CD4-positive, alpha-beta memory T cell (primary cell): ENCODE measurements at regions of chr10 and their contacts with region 1.

Region 1: GRCh38 chr10:28532383-28533175 is at the start of gene WAC:
- DNase-seq: peak; percentile 96 to 99 (median 97)
- H3K4me3 ChIP-seq: peak within 1 kb of the TSS; percentile 82 to 86
- H3K4me3 Mint-ChIP-seq: peak within 1 kb of the TSS; percentile 98 to 100 (median 99)
- H3K27ac ChIP-seq: peak within 1 kb of the TSS; percentile 99
- H3K27ac Mint-ChIP-seq: peak within 1 kb of the TSS; percentile 99 to 100 (median 100)
- H3K4me1 ChIP-seq: peaks cover 55% of the 10 kb centered on the region
- H3K4me1 Mint-ChIP-seq: peaks cover 45 to 75% (median 61%) of the 10 kb centered on the region in 4 donors
- H3K27me3 ChIP-seq: no peaks in the 10 kb centered on the region
- H3K27me3 Mint-ChIP-seq: no peaks in the 10 kb centered on the region
- total RNA-seq, gene WAC: 170 to 174 TPM

Region 2: DNA sequence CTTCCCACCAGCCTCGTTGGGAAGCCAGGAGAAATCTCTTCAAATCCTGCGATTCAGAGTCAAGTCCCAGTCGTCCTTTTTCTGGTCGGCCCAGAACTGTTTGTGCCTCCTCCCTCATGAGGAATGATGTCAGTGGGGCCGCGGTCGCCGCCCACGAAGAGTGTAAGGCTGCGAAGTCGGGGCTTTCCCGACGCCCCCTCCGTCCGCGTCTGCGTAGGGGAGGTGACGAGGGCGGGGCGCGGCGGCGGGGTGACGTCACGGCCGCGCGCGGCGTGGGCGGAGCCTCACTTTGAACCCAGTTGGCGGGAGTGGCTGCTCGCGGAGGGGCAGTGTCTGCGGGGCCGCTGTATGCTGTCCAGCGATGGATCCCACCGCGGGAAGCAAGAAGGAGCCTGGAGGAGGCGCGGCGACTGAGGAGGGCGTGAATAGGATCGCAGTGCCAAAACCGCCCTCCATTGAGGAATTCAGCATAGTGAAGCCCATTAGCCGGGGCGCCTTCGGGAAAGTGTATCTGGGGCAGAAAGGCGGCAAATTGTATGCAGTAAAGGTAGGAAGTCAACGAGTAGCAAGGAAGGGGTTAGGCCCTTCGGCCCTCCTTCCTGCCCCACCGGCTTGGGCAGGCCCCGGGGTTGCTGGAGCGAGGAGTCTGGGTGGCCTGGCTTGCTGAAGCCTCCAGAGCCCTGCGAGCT is 1377.4 kb before region 1 on chr10 and contains the start of gene MASTL:
- CTCF ChIA-PET with region 1: no interaction called
- POLR2A ChIA-PET with region 1: interaction called, 14 read pairs
- intact Hi-C with region 1: loop called (anchors 2 kb)
- DNase-seq: peak; percentile 94 to 97 (median 96)
- H3K4me3 ChIP-seq: peak within 1 kb of the TSS; percentile 82 to 100
- H3K4me3 Mint-ChIP-seq: peak within 1 kb of the TSS; percentile 95 to 100 (median 98)
- H3K27ac ChIP-seq: peak within 1 kb of the TSS; percentile 100
- H3K27ac Mint-ChIP-seq: peak within 1 kb of the TSS; percentile 100
- H3K4me1 ChIP-seq: peaks cover 40% of the 10 kb centered on the region
- H3K4me1 Mint-ChIP-seq: peaks cover 25 to 67% (median 45%) of the 10 kb centered on the region in 4 donors
- H3K27me3 ChIP-seq: no peaks in the 10 kb centered on the region
- H3K27me3 Mint-ChIP-seq: no peaks in the 10 kb centered on the region
- total RNA-seq, gene MASTL: 7.0 to 7.9 TPM

Region 3: GRCh38 chr10:27504007-27504807 is 1028.4 kb before region 1 on chr10 and contains the start of gene RAB18:
- CTCF ChIA-PET with region 1: no interaction called
- POLR2A ChIA-PET with region 1: interaction called, 9 read pairs
- intact Hi-C with region 1: loop called (anchors 1 kb)
- DNase-seq: peak; percentile 97 to 99 (median 99)
- H3K4me3 ChIP-seq: peak within 1 kb of the TSS; percentile 59 to 74
- H3K4me3 Mint-ChIP-seq: peak within 1 kb of the TSS; percentile 96 to 100 (median 99)
- H3K27ac ChIP-seq: peak within 1 kb of the TSS; percentile 90
- H3K27ac Mint-ChIP-seq: peak within 1 kb of the TSS; percentile 96 to 100 (median 99)
- H3K4me1 ChIP-seq: peaks cover 42% of the 10 kb centered on the region
- H3K4me1 Mint-ChIP-seq: peaks cover 44 to 56% (median 51%) of the 10 kb centered on the region in 4 donors
- H3K27me3 ChIP-seq: no peaks in the 10 kb centered on the region
- H3K27me3 Mint-ChIP-seq: no peaks in the 10 kb centered on the region
- total RNA-seq, gene RAB18: 83.3 to 88.5 TPM

Region 4: GRCh38 chr10:28334296-28334695 is 198.3 kb before region 1 on chr10:
- CTCF ChIA-PET with region 1: no interaction called
- POLR2A ChIA-PET with region 1: interaction called, 23 read pairs
- intact Hi-C with region 1: loop called (anchors 1 kb)
- DNase-seq: peak; percentile 87 to 95 (median 93)
- H3K4me3 ChIP-seq: peak overlapping the region; percentile 36 to 94
- H3K4me3 Mint-ChIP-seq: peak overlapping the region; percentile 91 to 98 (median 96)
- H3K27ac ChIP-seq: peak overlapping the region; percentile 97
- H3K27ac Mint-ChIP-seq: peak overlapping the region; percentile 99 to 100 (median 100)
- H3K4me1 ChIP-seq: peaks cover 62% of the 10 kb centered on the region
- H3K4me1 Mint-ChIP-seq: peaks cover 32 to 70% (median 49%) of the 10 kb centered on the region in 4 donors
- H3K27me3 ChIP-seq: no peaks in the 10 kb centered on the region
- H3K27me3 Mint-ChIP-seq: no peaks in the 10 kb centered on the region

Region 5: DNA sequence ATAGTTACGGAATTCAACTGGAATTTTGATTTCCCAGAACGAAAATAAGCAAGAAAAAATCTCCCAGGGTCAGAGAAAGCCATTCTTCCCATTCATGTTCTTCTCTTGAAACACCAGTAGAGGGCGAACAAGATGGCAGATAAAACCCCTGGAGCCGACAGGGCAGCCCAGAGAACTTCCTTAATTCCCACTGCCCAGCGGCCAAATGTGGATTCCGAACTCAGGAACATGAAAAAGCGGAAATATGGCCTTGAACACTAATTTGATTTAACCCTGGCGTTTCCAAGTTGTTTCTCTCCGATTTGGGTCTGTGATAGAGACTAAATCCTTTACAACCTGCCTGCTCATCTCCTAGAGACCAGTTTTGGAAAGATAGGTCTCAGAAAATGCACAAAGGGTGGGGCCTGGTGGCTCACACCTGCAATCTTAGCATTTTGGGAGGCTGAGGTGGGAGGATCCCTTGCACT is 100.3 kb before region 1 on chr10:
- CTCF ChIA-PET with region 1: no interaction called
- POLR2A ChIA-PET with region 1: interaction called, 8 read pairs
- intact Hi-C with region 1: loop called (anchors 5 kb)
- DNase-seq: peak in 4 of 5 donors; percentile 21 to 44 (median 27)
- H3K4me3 ChIP-seq: peak overlapping the region in 1 of 2 donors; percentile 42
- H3K4me3 Mint-ChIP-seq: peak overlapping the region; percentile 27 to 73 (median 62)
- H3K27ac ChIP-seq: no peak overlapping the region
- H3K27ac Mint-ChIP-seq: peak overlapping the region in 1 of 7 donors; percentile 70
- H3K4me1 ChIP-seq: peaks cover 4% of the 10 kb centered on the region
- H3K4me1 Mint-ChIP-seq: peaks cover 3 to 9% (median 6%) of the 10 kb centered on the region in 4 donors
- H3K27me3 ChIP-seq: no peaks in the 10 kb centered on the region
- H3K27me3 Mint-ChIP-seq: peaks cover 0 to 2% of the 10 kb centered on the region in 2 donors

Region 6: DNA sequence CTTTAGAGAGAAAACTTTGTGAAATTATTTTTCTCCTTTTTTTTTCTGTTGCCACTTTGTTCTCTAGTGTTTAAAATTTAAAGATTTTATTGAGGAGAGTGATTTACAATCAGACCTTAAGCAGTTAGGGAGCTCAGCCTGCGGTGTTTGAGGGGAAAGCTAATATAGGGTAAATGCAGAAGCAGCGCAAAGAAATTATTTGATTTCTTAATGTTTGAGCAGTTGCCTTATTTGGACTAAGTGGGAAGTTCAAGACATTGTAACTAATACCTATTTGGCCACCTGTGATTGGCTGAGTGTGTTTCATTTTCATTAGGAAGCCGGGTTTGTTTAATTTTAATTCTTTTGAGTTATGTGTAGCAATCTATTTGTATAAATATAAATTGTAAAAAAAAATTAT is 25.6 kb after region 1 on chr10:
- CTCF ChIA-PET with region 1: no interaction called
- POLR2A ChIA-PET with region 1: interaction called, 14 read pairs
- intact Hi-C with region 1: no loop called
- DNase-seq: no peak
- H3K4me3 ChIP-seq: no peak overlapping the region
- H3K4me3 Mint-ChIP-seq: peak overlapping the region in 1 of 8 donors; percentile 22
- H3K27ac ChIP-seq: no peak overlapping the region
- H3K27ac Mint-ChIP-seq: peak overlapping the region in 1 of 7 donors; percentile 2
- H3K4me1 ChIP-seq: peaks cover 96% of the 10 kb centered on the region
- H3K4me1 Mint-ChIP-seq: peaks cover 59 to 96% (median 78%) of the 10 kb centered on the region in 4 donors
- H3K27me3 ChIP-seq: no peaks in the 10 kb centered on the region
- H3K27me3 Mint-ChIP-seq: no peaks in the 10 kb centered on the region

Region 7: DNA sequence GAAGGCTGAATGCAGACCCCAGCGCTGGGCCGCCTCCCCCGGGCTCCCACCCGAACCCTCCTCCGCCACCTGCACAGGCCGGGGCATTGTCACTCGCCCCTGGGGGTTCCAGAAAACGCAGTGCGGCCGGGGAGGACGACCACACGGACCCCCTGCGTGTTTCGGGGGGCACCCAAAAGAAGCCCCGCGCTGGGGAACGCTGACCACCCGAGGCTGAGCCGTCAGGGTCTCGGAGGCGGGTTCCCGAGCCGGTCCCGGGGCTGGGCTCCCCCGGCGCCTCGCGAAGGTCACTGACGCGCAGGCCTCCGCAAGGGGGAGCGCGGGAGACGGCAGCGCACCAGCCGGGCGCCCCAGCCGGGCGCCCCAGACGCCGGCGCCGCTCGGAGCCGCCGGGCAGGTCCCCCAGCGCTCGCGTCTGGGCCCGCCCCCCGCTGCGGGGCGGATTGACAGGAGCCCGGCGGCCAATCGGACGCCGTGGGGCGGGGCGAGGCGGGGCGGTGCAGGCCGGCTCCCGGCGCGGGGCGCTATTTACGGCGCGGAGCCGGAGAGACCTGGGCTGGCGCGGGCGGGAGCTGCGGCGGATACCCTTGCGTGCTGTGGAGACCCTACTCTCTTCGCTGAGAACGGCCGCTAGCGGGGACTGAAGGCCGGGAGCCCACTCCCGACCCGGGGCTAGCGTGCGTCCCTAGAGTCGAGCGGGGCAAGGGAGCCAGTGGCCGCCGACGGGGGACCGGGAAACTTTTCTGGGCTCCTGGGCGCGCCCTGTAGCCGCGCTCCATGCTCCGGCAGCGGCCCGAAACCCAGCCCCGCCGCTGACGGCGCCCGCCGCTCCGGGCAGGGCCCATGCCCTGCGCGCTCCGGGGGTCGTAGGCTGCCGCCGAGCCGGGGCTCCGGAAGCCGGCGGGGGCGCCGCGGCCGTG is 144.6 kb after region 1 on chr10 and contains the start of gene BAMBI:
- CTCF ChIA-PET with region 1: no interaction called
- POLR2A ChIA-PET with region 1: interaction called, 4 read pairs
- intact Hi-C with region 1: loop called (anchors 5 kb)
- DNase-seq: peak; percentile 88 to 92 (median 90)
- H3K4me3 ChIP-seq: peak within 1 kb of the TSS; percentile 7 to 49
- H3K4me3 Mint-ChIP-seq: peak within 1 kb of the TSS; percentile 79 to 91 (median 84)
- H3K27ac ChIP-seq: no peak within 1 kb of the TSS
- H3K27ac Mint-ChIP-seq: peak within 1 kb of the TSS in 6 of 7 donors; percentile 11 to 71 (median 46)
- H3K4me1 ChIP-seq: peaks cover 26% of the 10 kb centered on the region
- H3K4me1 Mint-ChIP-seq: peaks cover 14 to 30% (median 22%) of the 10 kb centered on the region in 4 donors
- H3K27me3 ChIP-seq: peaks cover 34% of the 10 kb centered on the region
- H3K27me3 Mint-ChIP-seq: peaks cover 34 to 44% of the 10 kb centered on the region in 2 donors
- total RNA-seq, gene BAMBI: 0.29 TPM in 1 of 2 experiments, not detected in the other